ENCODE measurements at regions of chr3 and their contacts with region 1.

Region 1: GRCh38 chr3:155232605-155233004 is 60.9 kb downstream of the STRIT1 start:
- DNase-seq: peak; percentile 71
- ATAC-seq: peak; percentile 92

Region 2: GRCh38 chr3:155158393-155159037 is 74.1 kb before region 1 on chr3:
- intact Hi-C with region 1: no loop called
- DNase-seq: no peak
- ATAC-seq: no peak

Region 3: DNA sequence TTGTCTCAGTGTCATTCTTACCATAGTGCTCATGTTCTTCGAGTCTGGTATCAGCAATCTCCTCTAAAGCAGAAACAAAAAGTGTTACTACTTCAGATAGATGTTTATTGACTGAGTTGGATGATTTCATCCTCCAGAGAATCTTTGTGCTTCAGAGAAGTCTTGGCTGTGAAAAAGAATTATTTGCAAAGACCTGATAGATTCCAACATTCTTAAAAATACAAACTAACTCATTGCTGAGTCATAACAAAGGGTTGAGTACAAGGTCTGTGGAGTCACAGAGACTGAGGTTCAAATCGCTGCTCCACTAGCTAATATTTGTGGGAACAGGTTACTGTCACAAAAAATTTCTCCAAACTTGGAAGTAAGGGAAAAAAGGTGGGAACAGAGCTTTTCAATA is 69.9 kb after region 1 on chr3:
- intact Hi-C with region 1: no loop called
- DNase-seq: no peak
- ATAC-seq: no peak

Region 4: GRCh38 chr3:155313300-155313699 is 80.7 kb after region 1 on chr3:
- intact Hi-C with region 1: loop called (anchors 10 kb)
- DNase-seq: no peak
- ATAC-seq: no peak

Measured in Right ventricle myocardium superior (tissue), 1 donor.